Activated CD8-positive, alpha-beta T cell treated with anti-CD3 and anti-CD28 coated beads for 36 hours (primary cell): ENCODE measurements at regions of chr12 and their contacts with region 1.

Region 1: DNA sequence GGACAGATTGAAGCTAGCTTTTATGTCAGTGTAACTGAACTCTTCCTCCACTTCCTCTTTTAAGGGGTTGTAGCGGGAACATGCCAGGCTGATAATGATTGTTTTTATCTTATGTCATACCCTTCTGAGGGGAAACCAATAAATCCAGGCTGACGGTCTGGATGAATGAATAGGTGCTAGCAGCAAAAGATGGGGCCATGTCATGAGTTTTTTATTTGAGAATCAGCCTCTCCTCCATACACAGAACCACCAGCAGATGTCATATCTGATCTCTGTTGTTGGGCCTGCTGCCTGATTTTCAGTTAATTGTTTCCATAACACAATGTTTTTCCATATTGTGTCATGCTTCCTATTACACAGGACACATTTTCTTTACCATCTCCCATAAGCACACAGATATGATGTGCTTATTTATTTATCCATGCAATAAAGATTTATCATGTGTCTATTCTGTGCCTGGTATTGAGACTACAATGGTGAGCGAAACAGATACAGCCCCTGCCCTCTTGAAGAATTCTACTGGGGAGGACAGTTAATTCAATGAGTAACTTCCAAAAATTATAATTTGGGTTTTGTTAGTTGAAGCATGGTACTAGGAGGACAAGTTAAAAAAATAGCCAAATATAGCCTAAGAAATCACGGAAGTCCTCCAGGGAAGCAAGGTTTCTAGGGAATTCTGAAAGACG is 33.6 kb upstream of the CRY1 start:
- DNase-seq: no peak
- ATAC-seq: no peak
- H3K4me3 Mint-ChIP-seq: no peak overlapping the region
- H3K27ac Mint-ChIP-seq: no peak overlapping the region
- H3K4me1 Mint-ChIP-seq: no peaks in the 10 kb centered on the region
- H3K27me3 Mint-ChIP-seq: peaks cover 12% of the 10 kb centered on the region
- CTCF ChIP-seq: no peak

Region 2: DNA sequence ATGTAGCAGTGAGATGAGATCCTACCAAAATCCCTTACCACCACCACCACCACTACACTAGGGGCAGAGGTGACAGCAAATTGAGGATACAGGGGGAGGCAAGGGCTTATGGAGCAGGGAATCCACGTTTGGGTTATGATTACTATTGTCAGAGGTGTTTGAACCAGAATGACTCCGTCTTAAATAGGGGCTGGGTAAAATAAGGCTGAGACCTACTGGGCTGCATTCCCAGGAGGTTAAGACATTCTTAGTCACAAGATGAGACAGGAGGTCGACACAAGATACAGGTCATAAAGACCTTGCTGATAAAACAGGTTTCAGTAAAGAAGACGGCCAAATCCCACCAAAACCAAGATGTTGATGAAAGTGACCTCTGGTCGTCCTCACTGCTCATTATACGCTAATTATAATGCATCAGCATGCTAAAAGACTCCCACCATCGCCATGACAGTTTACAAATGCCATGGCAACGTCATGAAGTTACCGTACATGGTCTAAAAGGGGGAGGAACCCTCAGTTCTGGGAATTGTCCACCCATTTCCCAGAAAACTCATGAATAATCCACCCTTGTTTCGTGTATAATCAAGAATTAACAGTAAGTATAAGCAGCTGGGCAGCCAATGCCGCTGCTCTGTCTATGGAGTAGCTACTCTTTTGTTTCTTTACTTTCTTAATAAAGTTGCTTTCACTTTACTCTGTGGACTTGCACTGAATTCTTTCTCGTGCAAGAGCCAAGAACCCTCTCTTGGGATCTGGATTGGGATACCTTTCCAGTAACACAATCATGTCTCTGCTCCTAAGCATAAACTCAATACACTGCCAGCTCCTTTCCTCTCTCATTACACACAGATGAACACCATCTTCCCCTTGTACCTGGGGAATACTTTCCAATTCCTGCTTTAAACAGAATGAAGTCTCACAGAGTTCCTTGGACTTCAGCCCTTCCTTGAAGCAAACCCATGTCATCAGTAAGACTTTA is 16.9 kb before region 1 on chr12:
- CTCF ChIA-PET with region 1: interaction called, 78 read pairs
- POLR2A ChIA-PET with region 1: no interaction called
- intact Hi-C with region 1: no loop called
- DNase-seq: no peak
- ATAC-seq: no peak
- H3K4me3 Mint-ChIP-seq: no peak overlapping the region
- H3K27ac Mint-ChIP-seq: no peak overlapping the region
- H3K4me1 Mint-ChIP-seq: no peaks in the 10 kb centered on the region
- H3K27me3 Mint-ChIP-seq: peaks cover 5% of the 10 kb centered on the region
- CTCF ChIP-seq: no peak